Breast epithelium (tissue), 4 donors: ENCODE measurements at regions of chr15 and their contacts with region 1.

Region 1: DNA sequence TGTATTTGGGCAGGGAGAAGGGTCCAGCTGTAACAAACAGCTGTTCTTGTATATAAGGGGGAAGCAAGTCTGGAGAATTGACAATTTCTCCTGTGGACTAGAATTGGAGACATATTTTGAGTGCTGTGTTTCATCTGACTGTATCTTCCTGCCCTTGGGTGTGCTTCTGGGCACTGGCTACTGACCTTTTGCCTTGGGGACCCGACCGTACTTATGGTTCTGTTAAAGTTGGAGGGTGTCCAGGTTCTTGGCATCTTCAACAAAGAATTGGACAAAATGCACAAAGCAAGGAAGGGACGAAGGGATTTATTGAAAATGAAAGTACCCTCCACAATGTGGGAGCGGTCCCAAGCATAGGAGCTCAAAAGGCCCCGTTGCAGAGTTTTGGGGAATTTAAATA is 31.0 kb downstream of the MAP2K1 start:
- DNase-seq: no peak
- H3K4me3 ChIP-seq: peak overlapping the region in 2 of 3 donors; percentile 25 to 40
- H3K27ac ChIP-seq: no peak overlapping the region
- H3K4me1 ChIP-seq: no peaks in the 10 kb centered on the region
- H3K27me3 ChIP-seq: no peaks in the 10 kb centered on the region
- CTCF ChIP-seq: no peak
- POLR2A ChIP-seq: no peak

Region 2: GRCh38 chr15:66401130-66402021 is 16.4 kb before region 1 on chr15:
- intact Hi-C with region 1: loop called (anchors 2 kb)
- DNase-seq: no peak
- H3K4me3 ChIP-seq: no peak overlapping the region
- H3K27ac ChIP-seq: no peak overlapping the region
- H3K4me1 ChIP-seq: no peaks in the 10 kb centered on the region
- H3K27me3 ChIP-seq: no peaks in the 10 kb centered on the region
- CTCF ChIP-seq: no peak
- POLR2A ChIP-seq: no peak

Region 3: DNA sequence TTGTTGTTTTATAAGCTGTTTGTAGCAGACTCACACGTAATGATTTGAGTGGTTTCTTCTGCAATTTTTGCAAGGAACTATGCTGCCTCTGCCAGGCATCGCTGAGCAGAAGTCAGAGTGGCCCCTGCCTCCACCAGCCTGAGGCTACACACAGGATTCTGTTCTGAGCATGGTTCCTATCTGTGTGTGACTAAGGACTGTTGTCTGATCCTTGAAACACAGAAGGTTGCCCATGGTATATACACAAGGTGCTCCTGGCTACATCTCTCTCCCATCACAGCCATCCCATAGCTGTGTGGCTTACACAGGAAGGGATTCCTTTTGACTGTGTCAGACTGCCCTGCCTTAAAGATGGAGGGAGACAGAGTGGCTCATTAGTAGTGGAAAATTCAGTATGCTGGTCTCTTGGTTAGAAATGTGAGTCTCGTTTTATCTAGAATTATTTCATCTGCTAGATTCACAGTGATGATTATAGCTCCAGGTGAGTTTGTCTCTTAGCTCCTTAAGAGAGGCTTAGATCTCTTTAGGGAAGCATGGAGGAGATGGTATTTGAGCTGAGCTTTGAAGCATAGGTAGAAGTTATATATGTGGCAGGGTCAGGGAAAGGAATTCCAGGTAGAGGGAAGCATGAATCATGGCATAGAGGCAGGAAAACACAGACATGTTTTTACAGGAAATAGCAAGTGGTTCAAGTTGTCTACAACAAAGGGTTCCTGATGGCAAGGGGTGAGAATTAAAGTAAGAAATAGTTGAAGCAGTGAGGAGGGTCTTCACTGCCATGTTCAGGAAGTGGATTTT is 42.3 kb after region 1 on chr15:
- intact Hi-C with region 1: loop called (anchors 2 kb)
- DNase-seq: no peak
- H3K4me3 ChIP-seq: no peak overlapping the region
- H3K27ac ChIP-seq: no peak overlapping the region
- H3K4me1 ChIP-seq: no peaks in the 10 kb centered on the region
- H3K27me3 ChIP-seq: no peaks in the 10 kb centered on the region
- CTCF ChIP-seq: no peak
- POLR2A ChIP-seq: no peak

Region 4: DNA sequence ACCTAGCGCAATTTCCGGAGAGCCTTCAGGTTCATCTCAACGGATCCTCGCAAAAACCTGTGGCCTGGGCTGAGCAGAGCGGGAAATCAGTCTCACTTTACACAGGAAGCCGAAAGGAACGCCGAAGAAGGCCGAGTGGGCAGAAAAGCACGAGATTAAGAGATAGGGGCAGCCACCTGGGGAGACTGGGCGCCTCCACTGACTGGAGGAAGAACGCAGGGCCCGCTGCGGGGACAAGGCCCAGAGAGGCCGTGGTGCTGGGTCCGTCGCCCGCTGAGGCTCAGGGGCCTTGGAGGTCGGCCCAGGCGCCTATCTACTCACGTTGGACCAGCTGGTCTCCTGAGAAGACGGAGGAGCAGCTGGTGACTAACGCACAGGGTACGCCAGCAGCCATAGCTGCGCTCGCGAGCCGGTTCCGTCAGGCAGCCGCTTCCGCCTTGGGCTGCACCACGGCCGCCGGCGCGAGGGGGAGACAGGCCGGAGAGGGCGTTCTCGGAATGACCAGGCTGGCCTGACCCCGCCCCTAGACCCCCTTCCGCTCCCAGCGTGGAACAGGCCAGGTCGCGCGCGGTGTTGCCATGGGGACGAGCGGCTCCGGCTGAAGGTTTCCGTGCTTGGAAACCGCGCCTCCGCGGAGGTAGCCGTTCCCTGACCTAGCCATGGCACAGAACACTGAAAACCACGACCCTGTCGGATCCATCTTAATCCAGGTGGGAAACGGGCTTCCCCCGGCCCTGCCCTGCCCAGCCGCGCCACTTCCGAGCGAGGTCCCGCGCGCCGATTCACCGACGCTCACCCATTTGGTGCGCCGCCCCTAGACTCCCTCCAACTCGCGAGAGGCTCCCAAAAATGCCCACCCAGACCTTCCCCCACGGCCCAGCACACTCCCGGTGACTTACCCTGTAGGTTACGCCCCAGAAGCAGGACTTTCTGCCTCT is 836.8 kb after region 1 on chr15 and contains the starts of genes AAGAB and IQCH:
- intact Hi-C with region 1: no loop called
- DNase-seq: peak; percentile 96 to 98
- H3K4me3 ChIP-seq: peak within 1 kb of the TSS; percentile 82 to 94 (median 93)
- H3K27ac ChIP-seq: peak within 1 kb of the TSS; percentile 92 to 95
- H3K4me1 ChIP-seq: peaks cover 0 to 11% of the 10 kb centered on the region in 2 donors
- H3K27me3 ChIP-seq: no peaks in the 10 kb centered on the region
- CTCF ChIP-seq: peak in 1 of 3 donors; percentile 8
- POLR2A ChIP-seq: peak; percentile 35
- total RNA-seq, gene AAGAB: 23.2 to 49.8 (median 46.5) TPM
- total RNA-seq, gene IQCH: 0.64 to 11.9 (median 6.6) TPM